WTC11 (cell line): ENCODE measurements at regions of chr7 and their contacts with region 1.

Region 1: DNA sequence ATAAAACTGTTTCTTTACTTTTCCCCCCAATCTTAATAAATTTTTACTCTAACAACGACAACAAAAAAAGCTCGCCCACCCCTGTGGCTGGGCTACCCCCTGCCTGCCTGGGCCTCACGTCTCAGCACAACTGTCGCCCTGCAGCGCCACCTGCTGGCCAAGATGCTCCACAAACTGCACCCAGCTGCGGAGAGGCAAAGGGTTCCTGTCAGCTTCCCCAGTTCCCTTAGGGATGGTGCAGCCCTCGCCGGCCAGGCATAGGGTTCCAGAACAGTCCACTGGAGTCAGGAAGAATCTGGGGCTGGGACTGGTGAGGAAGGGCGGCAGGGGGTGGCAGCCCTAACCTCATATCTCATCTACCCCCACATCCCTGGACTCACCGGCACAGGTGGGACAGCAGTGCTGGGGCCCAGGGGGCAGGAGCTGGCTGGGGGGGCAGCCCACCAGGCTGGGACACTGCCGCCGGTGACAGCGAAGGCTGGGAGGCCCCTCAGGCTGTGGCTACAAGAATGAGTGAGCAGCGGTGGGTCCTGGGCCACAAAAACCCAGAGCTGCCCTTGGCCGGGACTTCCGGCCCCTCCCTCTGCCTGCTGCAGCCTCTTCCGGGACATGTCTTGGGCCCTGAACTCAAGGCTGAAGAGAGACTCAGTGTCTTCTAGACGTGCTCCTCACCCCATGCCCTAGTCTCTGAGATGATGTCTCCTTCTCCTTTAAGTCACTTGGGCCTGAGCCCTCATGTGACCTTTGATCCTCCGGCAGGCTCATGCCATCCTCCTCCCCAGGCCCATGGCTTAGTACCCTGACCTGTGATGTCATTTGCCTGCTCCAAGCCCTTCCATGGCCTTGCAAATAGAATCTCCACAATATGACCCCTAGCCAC is 21.2 kb downstream of the ATP6V1F start:
- DNase-seq: peak; percentile 95
- ATAC-seq: peak; percentile 41
- H3K4me3 Mint-ChIP-seq: no peak overlapping the region
- H3K27ac Mint-ChIP-seq: no peak overlapping the region
- H3K4me1 Mint-ChIP-seq: peaks cover 5% of the 10 kb centered on the region; the same call in 1 of the 2 replicates
- H3K27me3 Mint-ChIP-seq: no peaks in the 10 kb centered on the region
- CTCF ChIP-seq: peak; percentile 91

Region 2: GRCh38 chr7:128378637-128379036 is 505.2 kb before region 1 on chr7:
- CTCF ChIA-PET with region 1: no interaction called
- POLR2A ChIA-PET with region 1: no interaction called
- DNase-seq: no peak
- ATAC-seq: no peak
- H3K4me3 Mint-ChIP-seq: no peak overlapping the region
- H3K27ac Mint-ChIP-seq: 0 out of 2 replicates have a peak overlapping the region, but pooled peaks have one; percentile 53
- H3K4me1 Mint-ChIP-seq: peaks cover 12% of the 10 kb centered on the region
- H3K27me3 Mint-ChIP-seq: peaks cover 21% of the 10 kb centered on the region
- CTCF ChIP-seq: no peak

Region 3: DNA sequence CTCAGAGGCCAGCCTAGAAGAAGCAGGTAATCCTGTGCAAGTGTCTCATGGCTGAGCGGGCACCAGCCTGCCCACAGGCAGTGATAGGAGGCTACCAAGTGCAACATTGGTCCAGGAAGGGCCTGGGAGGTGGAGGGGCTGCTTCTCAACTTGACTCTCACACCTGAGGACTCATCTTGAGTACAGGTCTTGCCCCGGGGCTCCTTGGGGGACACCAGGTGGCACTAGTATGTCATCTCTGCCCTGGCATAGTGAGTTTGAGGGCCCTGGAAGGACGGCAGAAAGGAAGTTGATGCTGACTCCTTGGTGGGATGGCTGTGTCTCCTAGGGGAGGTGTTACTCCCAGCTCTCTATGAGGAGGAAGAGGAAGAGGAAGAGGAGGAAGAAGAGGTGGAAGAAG is 89.8 kb before region 1 on chr7:
- CTCF ChIA-PET with region 1: interaction called, 16 read pairs
- POLR2A ChIA-PET with region 1: no interaction called
- DNase-seq: no peak
- ATAC-seq: no peak
- H3K4me3 Mint-ChIP-seq: no peak overlapping the region
- H3K27ac Mint-ChIP-seq: peak overlapping the region; percentile 82
- H3K4me1 Mint-ChIP-seq: peaks cover 37% of the 10 kb centered on the region
- H3K27me3 Mint-ChIP-seq: peaks cover 9% of the 10 kb centered on the region
- CTCF ChIP-seq: no peak

Region 4: GRCh38 chr7:128841921-128842651 is 41.8 kb before region 1 on chr7:
- CTCF ChIA-PET with region 1: interaction called, 47 read pairs
- POLR2A ChIA-PET with region 1: no interaction called
- DNase-seq: peak; percentile 78
- ATAC-seq: peak; percentile 71
- H3K4me3 Mint-ChIP-seq: peak overlapping the region; percentile 40; the same call in 1 of the 2 replicates
- H3K27ac Mint-ChIP-seq: no peak overlapping the region; the same call in 1 of the 2 replicates
- H3K4me1 Mint-ChIP-seq: peaks cover 8% of the 10 kb centered on the region
- H3K27me3 Mint-ChIP-seq: no peaks in the 10 kb centered on the region; the same call in 1 of the 2 replicates
- CTCF ChIP-seq: peak; percentile 98

Region 5: GRCh38 chr7:128869138-128869943 is 14.5 kb before region 1 on chr7:
- CTCF ChIA-PET with region 1: interaction called, 149 read pairs
- POLR2A ChIA-PET with region 1: interaction called, 4 read pairs
- DNase-seq: peak; percentile 62
- ATAC-seq: peak; percentile 56
- H3K4me3 Mint-ChIP-seq: peak overlapping the region; percentile 66
- H3K27ac Mint-ChIP-seq: no peak overlapping the region
- H3K4me1 Mint-ChIP-seq: peaks cover 20% of the 10 kb centered on the region
- H3K27me3 Mint-ChIP-seq: peaks cover 49% of the 10 kb centered on the region
- CTCF ChIP-seq: no peak

Region 6: DNA sequence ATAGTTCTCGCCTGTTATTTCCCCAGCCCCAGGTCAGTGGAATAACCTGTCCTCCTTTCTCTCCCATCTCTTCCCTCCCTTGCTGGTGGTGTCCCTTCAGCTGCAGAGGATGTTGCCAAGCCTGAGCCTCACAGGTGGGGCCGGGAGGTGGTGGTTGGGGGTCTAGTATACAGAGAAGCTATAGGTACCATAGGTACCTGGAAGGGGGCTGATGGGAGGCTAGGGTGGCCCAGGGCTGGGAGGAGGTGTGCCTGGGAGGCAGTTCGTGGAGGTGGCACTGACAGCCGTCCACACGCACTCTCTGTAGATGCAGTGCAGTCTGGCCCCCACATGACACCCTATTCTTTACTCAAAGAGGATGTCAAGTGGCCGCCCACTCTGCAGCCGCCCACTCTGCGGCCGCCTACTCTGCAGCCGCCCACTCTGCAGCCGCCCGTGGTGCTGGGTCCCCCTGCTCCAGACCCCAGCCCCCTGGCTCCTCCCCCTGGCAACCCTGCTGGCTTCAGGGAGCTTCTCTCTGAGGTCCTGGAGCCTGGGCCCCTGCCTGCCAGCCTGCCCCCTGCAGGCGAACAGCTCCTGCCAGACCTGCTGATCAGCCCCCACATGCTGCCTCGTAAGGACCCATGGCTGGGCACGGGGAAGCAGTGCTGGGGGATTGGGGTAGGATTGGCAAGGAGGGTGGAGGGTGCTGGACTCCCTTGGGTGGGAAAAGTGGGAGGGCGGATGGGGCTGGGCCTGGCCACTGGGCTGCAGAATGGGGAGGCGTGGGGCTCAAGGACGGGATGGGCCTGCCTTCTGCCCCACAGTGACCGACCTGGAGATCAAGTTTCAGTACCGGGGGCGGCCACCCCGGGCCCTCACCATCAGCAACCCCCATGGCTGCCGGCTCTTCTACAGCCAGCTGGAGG is 63.3 kb after region 1 on chr7:
- CTCF ChIA-PET with region 1: interaction called, 10 read pairs
- POLR2A ChIA-PET with region 1: no interaction called
- DNase-seq: peak; percentile 65
- ATAC-seq: peak; percentile 82
- H3K4me3 Mint-ChIP-seq: no peak overlapping the region
- H3K27ac Mint-ChIP-seq: no peak overlapping the region
- H3K4me1 Mint-ChIP-seq: no peaks in the 10 kb centered on the region
- H3K27me3 Mint-ChIP-seq: no peaks in the 10 kb centered on the region; the same call in 1 of the 2 replicates
- CTCF ChIP-seq: 0 out of 2 replicates have a peak, but pooled peaks have one; percentile 15